Right cardiac atrium (tissue), 5 donors: ENCODE measurements at regions of chr2 and their contacts with region 1.

Region 1: DNA sequence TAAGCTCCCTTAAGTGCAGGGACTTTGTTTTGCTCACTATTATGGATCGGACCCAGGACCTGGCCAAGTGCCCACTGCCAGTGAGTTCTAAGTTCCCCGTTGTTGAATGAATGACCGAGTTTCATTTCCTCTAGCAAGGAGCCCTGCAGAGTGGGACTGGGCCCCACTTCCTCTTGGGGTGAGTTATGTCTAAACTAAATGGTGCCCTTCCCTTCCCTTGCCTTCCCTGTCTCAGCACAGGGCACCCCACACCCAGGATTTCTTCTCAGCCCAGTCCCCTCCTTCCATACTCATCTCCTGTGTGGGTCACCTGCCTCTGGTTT is 195.3 kb upstream of the HS6ST1 start:
- DNase-seq: peak; percentile 28 to 73 (median 65)
- ATAC-seq: peak; percentile 59 to 63
- H3K4me3 ChIP-seq: no peak overlapping the region
- H3K27ac ChIP-seq: no peak overlapping the region
- H3K4me1 ChIP-seq: no peaks in the 10 kb centered on the region
- H3K27me3 ChIP-seq: no peaks in the 10 kb centered on the region

Region 2: DNA sequence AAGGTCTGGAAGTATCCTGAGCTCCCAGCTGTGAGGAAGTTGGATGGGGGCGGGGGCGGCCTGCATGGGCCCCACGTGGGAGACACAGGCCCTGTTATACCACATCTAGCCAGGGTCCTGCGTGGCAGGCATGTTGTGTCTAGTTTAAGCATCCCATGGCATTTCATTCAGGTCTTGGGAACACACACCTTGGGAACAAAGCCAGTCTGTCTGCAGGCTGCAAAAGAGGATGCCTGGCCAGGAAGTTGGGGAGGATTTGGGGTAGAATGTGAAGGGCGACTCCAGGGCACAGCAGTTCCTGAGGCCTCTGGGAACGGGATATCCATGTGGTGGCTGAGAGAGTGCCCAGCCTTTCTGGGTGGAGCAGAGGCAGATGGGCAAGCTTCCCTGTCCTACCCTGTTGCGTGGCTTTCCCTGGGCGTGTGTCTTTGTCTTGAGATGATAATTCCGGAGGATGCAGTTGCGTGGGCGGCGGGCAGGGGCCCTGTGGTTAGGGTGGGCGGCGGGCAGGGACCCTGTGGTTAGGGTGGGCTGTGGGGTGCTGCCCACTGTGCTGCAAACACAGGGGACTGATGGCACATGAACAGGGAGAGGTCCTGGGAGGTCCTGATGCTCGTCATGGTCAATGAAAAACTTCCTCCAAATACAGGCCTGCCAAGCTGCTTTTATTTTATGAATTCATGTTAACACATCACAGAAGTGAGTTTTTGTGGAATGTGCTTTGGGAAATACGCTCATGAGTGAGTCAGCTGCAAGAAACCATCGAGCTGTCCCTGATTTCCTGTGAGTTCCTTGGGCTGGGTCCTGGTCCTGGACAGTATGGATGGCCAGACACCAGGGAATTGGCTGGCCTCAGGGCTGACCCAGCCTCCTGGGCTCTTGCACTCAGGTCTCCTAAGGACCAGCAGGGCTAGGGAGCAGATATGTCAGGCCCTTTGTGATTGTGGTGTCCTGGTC is 105.3 kb before region 1 on chr2:
- intact Hi-C with region 1: no loop called
- DNase-seq: no peak
- ATAC-seq: no peak
- H3K4me3 ChIP-seq: no peak overlapping the region
- H3K27ac ChIP-seq: no peak overlapping the region
- H3K4me1 ChIP-seq: no peaks in the 10 kb centered on the region
- H3K27me3 ChIP-seq: no peaks in the 10 kb centered on the region

Region 3: DNA sequence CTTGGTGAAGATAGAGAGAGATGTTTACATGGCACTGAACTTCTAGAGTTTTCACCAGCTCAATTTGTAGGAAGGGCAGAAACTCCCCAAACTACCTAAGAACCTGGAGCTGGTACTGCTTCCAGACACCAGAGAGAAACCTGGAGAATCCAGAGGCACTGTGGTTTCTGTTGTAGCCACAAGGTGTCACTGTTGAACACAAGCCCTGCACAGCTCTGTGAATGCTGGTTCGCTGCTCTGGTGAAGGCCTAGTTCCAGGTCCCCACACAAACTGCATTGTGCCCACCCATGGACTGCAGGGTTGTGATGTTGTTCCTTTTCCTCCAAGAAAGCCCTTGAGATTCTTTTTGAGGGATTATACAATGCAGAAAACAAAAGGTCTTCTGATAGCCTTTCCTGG is 44.7 kb before region 1 on chr2:
- intact Hi-C with region 1: loop called in 1 of 4 experiments (anchors 5 kb)
- DNase-seq: no peak
- ATAC-seq: no peak
- H3K4me3 ChIP-seq: no peak overlapping the region
- H3K27ac ChIP-seq: no peak overlapping the region
- H3K4me1 ChIP-seq: peaks cover 2% of the 10 kb centered on the region
- H3K27me3 ChIP-seq: no peaks in the 10 kb centered on the region